ENCODE measurements at regions of chr7 and their contacts with region 1.

Region 1: GRCh38 chr7:143408686-143409561 is at the start of gene EPHA1:
- DNase-seq: peak; percentile 76 to 89
- H3K4me3 ChIP-seq: peak within 1 kb of the TSS; percentile 96
- H3K27ac ChIP-seq: peak within 1 kb of the TSS; percentile 33
- H3K4me1 ChIP-seq: peaks cover 23% of the 10 kb centered on the region
- H3K27me3 ChIP-seq: no peaks in the 10 kb centered on the region
- CTCF ChIP-seq: peak; percentile 83
- total RNA-seq, gene EPHA1: 35.5 and 39.3 TPM in 2 replicates

Region 2: GRCh38 chr7:143269251-143269650 is 139.7 kb before region 1 on chr7:
- CTCF ChIA-PET with region 1: no interaction called
- POLR2A ChIA-PET with region 1: no interaction called
- intact Hi-C with region 1: no loop called
- DNase-seq: no peak
- H3K4me3 ChIP-seq: no peak overlapping the region
- H3K27ac ChIP-seq: no peak overlapping the region
- H3K4me1 ChIP-seq: peaks cover 14% of the 10 kb centered on the region
- H3K27me3 ChIP-seq: no peaks in the 10 kb centered on the region
- CTCF ChIP-seq: no peak

Region 3: DNA sequence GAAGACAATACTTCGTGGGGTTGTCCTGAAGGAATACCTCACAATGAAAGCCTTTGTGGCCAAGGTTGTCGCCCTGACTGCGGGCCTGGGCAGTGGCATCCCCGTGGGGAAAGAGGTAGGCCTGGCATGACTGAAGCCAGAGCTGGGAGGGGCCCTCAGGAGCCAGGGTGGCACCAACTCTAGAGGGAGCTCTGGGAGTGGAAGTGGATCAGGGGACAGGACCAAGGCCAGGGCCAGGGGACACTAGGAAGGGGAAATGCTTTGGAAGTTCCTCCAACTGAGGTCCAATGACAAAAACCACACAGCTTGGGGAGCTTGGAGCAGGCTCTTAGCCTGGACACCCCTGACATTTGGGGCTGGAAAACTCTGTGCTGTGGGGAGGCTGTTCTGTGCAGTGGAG is 87.2 kb before region 1 on chr7:
- CTCF ChIA-PET with region 1: interaction called, 3 read pairs
- POLR2A ChIA-PET with region 1: no interaction called
- intact Hi-C with region 1: loop called (anchors 2 kb)
- DNase-seq: peak in 1 of 2 experiments; percentile 37
- H3K4me3 ChIP-seq: no peak overlapping the region
- H3K27ac ChIP-seq: no peak overlapping the region
- H3K4me1 ChIP-seq: peaks cover 6% of the 10 kb centered on the region; the same call in 1 of the 2 replicates
- H3K27me3 ChIP-seq: no peaks in the 10 kb centered on the region
- CTCF ChIP-seq: no peak; the same call in 1 of the 2 replicates